ENCODE measurements at regions of chr18 and their contacts with region 1.

Region 1: DNA sequence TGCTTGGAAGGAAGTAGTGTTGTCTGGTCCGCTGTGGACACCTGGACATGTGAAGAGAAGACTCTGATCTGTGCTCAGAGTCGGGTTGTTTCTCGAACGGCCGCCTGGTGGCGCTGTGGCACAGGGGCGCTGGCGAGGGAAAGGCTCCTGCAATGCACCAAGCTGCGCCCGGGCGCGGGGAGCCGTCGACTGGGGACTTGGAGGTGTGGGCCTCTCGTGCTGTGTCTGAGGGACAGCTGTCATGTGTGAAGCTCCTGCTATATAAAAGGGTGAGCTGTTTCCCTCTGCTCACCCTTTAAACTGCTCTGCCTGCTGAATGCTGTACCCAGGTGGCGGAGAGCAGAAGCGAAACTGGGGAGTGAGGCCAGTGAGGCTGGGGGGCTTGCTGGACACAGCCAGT is 44.0 kb downstream of the GNAL start:
- DNase-seq: peak; percentile 77
- H3K4me3 ChIP-seq: peak overlapping the region; percentile 49
- H3K27ac ChIP-seq: no peak overlapping the region
- H3K4me1 ChIP-seq: no peaks in the 10 kb centered on the region
- H3K27me3 ChIP-seq: peaks cover 77% of the 10 kb centered on the region
- CTCF ChIP-seq: peak; percentile 93

Region 2: GRCh38 chr18:11808001-11808855 is 75.2 kb after region 1 on chr18:
- intact Hi-C with region 1: no loop called
- DNase-seq: no peak
- H3K4me3 ChIP-seq: no peak overlapping the region
- H3K27ac ChIP-seq: no peak overlapping the region
- H3K4me1 ChIP-seq: no peaks in the 10 kb centered on the region
- H3K27me3 ChIP-seq: no peaks in the 10 kb centered on the region
- CTCF ChIP-seq: no peak

Region 3: GRCh38 chr18:11872479-11873136 is 139.6 kb after region 1 on chr18:
- intact Hi-C with region 1: loop called (anchors 10 kb)
- DNase-seq: no peak
- H3K4me3 ChIP-seq: no peak overlapping the region
- H3K27ac ChIP-seq: peak overlapping the region; percentile 68
- H3K4me1 ChIP-seq: no peaks in the 10 kb centered on the region
- H3K27me3 ChIP-seq: no peaks in the 10 kb centered on the region
- CTCF ChIP-seq: peak; percentile 63